Heart left ventricle (tissue), 16 donors: ENCODE measurements at regions of chr18 and their contacts with region 1.

Region 1: DNA sequence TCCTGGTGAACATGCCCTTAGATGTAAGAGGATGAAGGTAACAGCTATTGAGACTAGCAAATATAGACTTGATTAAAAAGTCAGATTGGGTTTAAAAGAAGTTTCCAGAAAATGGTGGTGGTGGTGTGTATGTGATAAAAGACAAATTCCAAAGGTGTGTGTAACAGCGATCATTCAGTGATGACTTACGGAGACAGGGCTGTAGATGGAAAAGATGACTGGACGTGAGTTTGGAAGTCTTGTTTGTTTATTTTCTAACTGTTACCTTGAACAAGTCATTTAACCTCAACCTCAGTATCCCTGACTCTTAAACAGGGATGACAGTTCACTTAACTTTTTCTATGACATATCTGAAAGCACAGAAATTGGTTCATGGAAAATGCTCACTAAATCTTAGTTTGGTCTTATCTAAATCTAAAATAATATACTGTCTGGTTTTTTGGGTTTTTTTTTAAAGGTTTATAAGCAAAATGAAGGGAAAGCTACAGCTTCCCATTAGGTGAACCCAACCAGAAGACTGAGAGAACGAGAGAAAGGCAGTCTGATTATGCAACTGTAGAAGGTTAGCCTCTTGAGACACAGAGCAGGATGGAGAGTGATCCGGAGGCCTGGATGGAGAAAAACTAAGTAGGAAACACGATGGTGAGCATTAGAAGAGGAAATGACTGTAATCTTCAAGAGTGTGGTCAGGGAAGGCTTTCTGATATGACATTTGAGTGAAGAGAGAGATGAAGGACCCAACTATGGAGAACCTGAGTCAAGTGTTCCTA is 71.9 kb downstream of the TCF4 start:
- DNase-seq: no peak
- ATAC-seq: peak in 2 of 4 donors; percentile 50 to 61
- H3K4me3 ChIP-seq: no peak overlapping the region
- H3K27ac ChIP-seq: peak overlapping the region in 8 of 12 donors; percentile 7 to 51 (median 18)
- H3K4me1 ChIP-seq: peaks cover 0 to 42% (median 16%) of the 10 kb centered on the region in 12 donors
- H3K27me3 ChIP-seq: no peaks in the 10 kb centered on the region
- CTCF ChIP-seq: no peak
- POLR2A ChIP-seq: no peak

Region 2: DNA sequence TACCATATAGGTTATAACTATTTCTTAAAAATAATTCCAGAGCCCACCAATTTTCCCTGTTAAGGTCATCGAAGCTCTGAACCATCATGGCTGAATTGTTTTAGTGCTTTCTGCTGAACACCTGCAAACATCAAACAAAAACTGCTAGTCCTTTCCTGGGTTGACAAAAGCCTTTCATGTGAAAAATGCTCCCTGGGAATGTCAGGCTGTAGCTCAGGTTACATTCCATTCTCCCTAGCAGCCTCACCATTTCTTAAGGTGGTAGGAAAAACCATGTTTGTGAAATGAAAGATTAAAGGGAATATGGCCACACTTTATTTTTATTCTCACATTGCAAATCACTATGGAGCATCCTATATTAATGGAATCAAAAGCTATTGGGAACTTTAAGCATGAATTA is 66.2 kb after region 1 on chr18:
- intact Hi-C with region 1: loop called in 6 of 10 experiments (anchors 5 to 10 kb)
- DNase-seq: no peak
- ATAC-seq: no peak
- H3K4me3 ChIP-seq: peak overlapping the region in 2 of 12 donors; percentile 11 to 76
- H3K27ac ChIP-seq: peak overlapping the region in 2 of 12 donors; percentile 6 to 12
- H3K4me1 ChIP-seq: peaks cover 0 to 70% (median 38%) of the 10 kb centered on the region in 12 donors
- H3K27me3 ChIP-seq: no peaks in the 10 kb centered on the region
- CTCF ChIP-seq: no peak
- POLR2A ChIP-seq: no peak

Region 3: DNA sequence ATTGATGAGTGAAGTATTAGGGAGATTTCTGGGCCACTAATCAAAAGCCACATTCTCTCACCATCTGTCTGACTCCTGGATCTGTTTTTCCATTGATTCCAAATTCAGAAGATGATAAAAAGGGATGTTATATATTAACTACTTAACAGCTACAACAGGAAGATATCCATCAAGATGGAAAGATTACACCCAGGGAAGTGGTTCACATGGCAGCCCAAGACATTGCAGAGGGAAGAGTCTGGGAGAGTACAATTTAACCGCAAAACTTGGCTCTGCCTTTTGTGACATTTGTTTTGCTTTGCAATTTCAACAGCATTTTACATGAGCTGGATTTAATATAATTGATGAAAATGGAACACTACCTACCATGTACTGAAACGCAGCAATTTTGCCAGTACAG is 94.4 kb after region 1 on chr18:
- intact Hi-C with region 1: no loop called
- DNase-seq: no peak
- ATAC-seq: no peak
- H3K4me3 ChIP-seq: no peak overlapping the region
- H3K27ac ChIP-seq: no peak overlapping the region
- H3K4me1 ChIP-seq: no peaks in the 10 kb centered on the region
- H3K27me3 ChIP-seq: no peaks in the 10 kb centered on the region
- CTCF ChIP-seq: no peak
- POLR2A ChIP-seq: no peak